ENCODE measurements at regions of chr2 and their contacts with region 1.

Region 1: GRCh38 chr2:45650851-45651414 is 542 bp upstream of the PRKCE start:
- DNase-seq: peak; percentile 94
- ATAC-seq: peak; percentile 85
- H3K4me3 Mint-ChIP-seq: peak overlapping the region; percentile 87
- H3K27ac Mint-ChIP-seq: peak overlapping the region; percentile 96
- H3K4me1 Mint-ChIP-seq: peaks cover 27% of the 10 kb centered on the region
- H3K27me3 Mint-ChIP-seq: peaks cover 6% of the 10 kb centered on the region

Region 2: GRCh38 chr2:45611020-45611737 is 39.8 kb before region 1 on chr2 and contains the start of gene SRBD1:
- CTCF ChIA-PET with region 1: no interaction called
- POLR2A ChIA-PET with region 1: no interaction called
- intact Hi-C with region 1: loop called (anchors 1 to 2 kb)
- DNase-seq: peak; percentile 96
- ATAC-seq: peak; percentile 97
- H3K4me3 Mint-ChIP-seq: peak within 1 kb of the TSS; percentile 93
- H3K27ac Mint-ChIP-seq: peak within 1 kb of the TSS; percentile 94
- H3K4me1 Mint-ChIP-seq: peaks cover 19% of the 10 kb centered on the region
- H3K27me3 Mint-ChIP-seq: no peaks in the 10 kb centered on the region
- total RNA-seq, gene SRBD1: 19.2 to 25.0 TPM

Region 3: DNA sequence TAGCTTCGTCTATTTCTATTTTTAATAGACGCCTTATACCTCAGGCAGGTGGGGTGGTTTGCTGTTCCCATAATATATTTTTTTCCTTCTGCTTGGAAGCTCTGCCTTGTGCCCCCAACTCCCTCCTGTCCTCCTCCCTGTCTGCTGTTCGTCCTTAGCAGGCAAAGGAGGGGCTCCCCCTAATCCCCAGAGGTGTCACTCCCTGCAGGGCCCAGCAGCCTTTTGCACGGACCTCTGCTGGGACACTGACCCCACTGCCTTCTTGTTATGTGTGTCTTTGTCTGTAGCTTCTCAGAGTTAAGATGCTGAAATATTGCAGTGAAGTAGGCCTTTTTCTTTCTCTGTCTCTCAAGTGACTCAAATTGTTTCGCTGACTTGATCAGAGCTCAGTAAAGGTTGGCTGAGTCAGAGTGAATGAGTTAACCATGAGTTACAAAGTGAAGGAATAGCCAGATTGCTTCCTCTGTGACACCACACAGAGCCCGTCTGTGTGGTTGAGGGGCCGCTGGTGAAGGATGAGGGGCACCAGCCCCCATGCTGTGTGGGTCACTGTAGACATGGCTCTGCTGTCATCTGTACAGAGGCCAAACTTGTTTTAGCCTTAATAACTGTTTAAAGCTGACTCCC is 48.2 kb after region 1 on chr2:
- CTCF ChIA-PET with region 1: no interaction called
- POLR2A ChIA-PET with region 1: no interaction called
- intact Hi-C with region 1: no loop called
- DNase-seq: peak; percentile 22
- ATAC-seq: peak; percentile 98
- H3K4me3 Mint-ChIP-seq: no peak overlapping the region
- H3K27ac Mint-ChIP-seq: no peak overlapping the region
- H3K4me1 Mint-ChIP-seq: peaks cover 16% of the 10 kb centered on the region
- H3K27me3 Mint-ChIP-seq: no peaks in the 10 kb centered on the region

Region 4: GRCh38 chr2:45750484-45750883 is 99.6 kb after region 1 on chr2:
- CTCF ChIA-PET with region 1: no interaction called
- POLR2A ChIA-PET with region 1: no interaction called
- intact Hi-C with region 1: loop called in 1 of 2 experiments (anchors 1 kb)
- DNase-seq: peak; percentile 17
- ATAC-seq: peak; percentile 96
- H3K4me3 Mint-ChIP-seq: no peak overlapping the region
- H3K27ac Mint-ChIP-seq: peak overlapping the region; percentile 75
- H3K4me1 Mint-ChIP-seq: peaks cover 23% of the 10 kb centered on the region
- H3K27me3 Mint-ChIP-seq: no peaks in the 10 kb centered on the region

Region 5: GRCh38 chr2:46351750-46352138 is 700.8 kb after region 1 on chr2:
- CTCF ChIA-PET with region 1: no interaction called
- POLR2A ChIA-PET with region 1: no interaction called
- intact Hi-C with region 1: loop called in 1 of 2 experiments (anchors 5 kb)
- DNase-seq: peak; percentile 84
- ATAC-seq: peak; percentile 93
- H3K4me3 Mint-ChIP-seq: peak overlapping the region; percentile 74
- H3K27ac Mint-ChIP-seq: peak overlapping the region; percentile 91
- H3K4me1 Mint-ChIP-seq: peaks cover 76% of the 10 kb centered on the region
- H3K27me3 Mint-ChIP-seq: no peaks in the 10 kb centered on the region